Right ventricle myocardium inferior (tissue), 1 donor: ENCODE measurements at regions of chr11 and their contacts with region 1.

Region 1: DNA sequence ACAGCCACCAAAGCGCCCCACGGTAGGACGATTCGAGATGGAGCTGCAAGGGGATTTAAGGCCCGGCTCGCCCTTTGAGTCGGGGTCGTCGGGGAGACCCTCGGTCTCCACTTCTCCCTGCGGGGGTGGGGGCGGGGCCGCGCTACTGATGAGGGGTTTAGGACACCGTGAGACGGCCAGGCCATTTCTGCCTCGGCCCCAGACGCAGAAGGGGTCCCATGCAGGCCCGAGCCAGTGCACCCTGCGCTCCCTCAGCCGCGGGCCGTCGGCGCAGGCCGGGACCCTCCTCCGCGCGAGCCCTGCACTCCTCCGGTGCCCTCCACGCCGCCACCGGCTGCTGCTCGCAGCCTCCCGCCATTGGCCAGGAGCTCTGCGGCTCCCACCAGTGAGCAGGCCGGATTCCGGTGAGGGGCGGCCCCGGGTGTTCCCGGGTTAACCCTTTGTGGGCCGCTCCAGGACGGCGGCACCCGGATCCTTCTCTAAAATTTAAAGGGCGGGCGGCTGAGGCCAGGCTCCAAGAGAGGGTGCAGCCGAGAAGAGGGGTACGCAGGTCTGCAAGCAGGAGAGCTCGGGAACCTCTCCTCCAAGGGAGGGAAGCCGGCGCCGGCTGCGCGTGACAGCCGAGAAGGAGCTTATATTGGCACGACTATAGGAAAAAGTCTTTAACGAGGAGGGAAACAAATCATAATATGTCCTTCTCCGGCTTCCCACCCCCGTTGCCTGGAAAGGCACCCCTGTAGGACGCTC is 18.0 kb downstream of the CREB3L1 start:
- DNase-seq: peak; percentile 87
- ATAC-seq: peak; percentile 89

Region 2: DNA sequence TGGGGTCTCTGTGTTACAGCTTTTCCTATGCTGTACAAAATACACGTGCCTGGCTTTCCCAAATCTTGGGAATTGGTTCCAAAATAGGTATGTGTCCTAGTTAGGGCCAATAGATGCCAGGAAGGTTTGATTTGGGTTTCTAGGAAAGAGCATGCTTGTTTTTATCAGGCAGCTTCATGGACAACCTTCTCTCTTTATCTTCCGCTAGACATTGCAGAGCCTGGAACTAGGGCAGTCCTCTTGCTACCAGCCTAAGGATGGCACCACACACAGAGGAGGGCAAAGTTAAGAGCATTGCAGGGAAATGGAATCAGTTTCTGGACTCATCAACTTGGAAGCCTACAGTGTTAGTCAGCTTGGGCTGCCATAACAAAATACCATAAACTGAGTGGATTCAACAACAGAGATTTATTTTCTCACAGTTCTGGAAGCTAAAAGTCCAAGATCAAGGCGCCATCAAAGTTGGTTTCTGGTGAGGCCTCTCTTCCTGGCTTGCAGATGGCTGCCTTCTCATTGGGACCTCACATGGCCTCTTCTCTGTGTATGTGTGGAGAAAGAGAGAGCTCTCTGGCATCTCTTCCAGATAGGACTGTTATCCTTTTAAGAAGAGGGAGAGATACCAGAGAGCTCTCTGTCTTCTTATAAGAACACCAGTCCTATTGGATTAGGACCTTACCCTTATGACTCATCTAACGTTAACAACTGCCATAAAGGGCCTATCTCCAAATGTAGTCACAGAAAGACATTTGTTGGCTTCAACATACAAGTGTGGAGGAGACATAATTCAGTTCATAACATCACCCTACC is 45.3 kb before region 1 on chr11:
- intact Hi-C with region 1: no loop called
- DNase-seq: no peak
- ATAC-seq: no peak

Region 3: GRCh38 chr11:46278387-46279125 is 16.9 kb before region 1 on chr11:
- intact Hi-C with region 1: loop called (anchors 2 kb)
- DNase-seq: no peak
- ATAC-seq: peak; percentile 28